ENCODE measurements at regions of chr10 and their contacts with region 1.

Region 1: DNA sequence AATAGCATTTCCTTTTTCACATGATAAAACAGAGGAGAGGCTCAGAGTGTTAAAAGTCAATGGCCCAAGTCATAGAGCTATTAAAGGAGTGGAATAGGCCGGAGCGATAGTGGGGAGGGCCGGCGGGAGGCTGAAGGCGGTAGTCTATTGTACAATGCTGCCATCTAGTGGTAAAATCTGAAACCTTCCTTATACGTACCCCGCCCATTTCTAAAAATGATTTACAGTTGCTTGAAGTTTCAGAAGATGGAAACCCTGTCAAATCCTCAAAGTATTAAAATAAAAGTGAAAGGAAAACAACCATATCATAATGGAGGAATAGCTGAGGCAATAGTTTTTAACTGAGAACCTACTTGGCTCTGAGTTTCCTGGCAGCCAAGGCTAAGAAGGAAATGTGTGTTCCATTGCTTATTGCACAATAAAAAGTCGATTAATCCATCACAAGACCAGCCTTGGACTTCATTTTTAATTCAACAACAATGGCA is 209.1 kb downstream of the CCSER2 start:
- DNase-seq: peak; percentile 74
- CTCF ChIP-seq: peak; percentile 29

Region 2: DNA sequence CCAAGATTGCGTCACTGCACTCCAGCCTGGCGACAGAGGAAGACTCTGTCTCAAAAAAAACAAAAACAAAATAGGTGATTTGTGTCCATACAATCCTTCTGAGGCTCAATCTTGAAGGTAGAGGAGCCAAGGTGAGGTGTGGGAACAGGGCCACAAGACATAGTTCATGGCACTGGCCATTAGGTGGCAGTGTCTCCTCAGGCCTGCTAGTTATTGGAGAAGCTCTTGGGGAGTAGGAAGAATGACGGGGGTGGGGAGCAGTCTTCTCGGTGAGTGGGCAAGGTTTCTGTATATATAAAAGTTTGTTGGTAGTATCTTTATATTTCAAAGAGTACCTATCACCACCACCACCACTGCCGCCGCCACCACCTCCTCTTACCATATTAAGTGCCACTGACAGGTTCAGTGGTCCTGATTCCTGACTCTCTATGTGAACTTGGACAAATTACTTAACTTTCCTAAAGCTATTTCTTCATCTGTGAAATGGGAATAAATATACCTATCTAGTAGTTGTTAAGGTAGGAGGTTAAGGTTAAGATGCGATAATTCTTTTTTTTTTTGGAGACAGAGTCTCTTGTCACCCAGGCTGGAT is 185.1 kb before region 1 on chr10:
- CTCF ChIA-PET with region 1: interaction called, 48 read pairs
- POLR2A ChIA-PET with region 1: no interaction called
- DNase-seq: peak; percentile 66
- CTCF ChIP-seq: peak; percentile 90

Region 3: DNA sequence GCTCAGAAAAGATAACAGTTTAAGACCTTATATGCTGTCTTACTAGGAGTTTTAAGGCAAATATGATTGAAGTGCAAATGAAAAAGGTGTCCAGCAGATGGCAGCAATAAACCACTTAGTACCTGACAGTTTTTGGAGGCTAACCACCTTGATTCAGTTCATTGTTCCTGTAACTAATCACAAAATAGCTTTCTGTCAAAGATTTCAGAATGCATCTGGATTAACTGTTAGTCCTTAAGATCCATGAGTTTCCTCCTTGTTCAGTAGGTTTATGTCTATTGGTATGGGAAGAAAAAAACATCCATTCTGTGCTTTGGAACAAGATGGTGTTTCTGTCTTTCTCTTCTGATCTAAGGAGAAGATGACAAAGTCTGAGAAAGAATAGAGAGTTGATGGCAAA is 162.5 kb before region 1 on chr10:
- CTCF ChIA-PET with region 1: interaction called, 99 read pairs
- POLR2A ChIA-PET with region 1: no interaction called
- DNase-seq: peak; percentile 16
- CTCF ChIP-seq: peak; percentile 68

Region 4: DNA sequence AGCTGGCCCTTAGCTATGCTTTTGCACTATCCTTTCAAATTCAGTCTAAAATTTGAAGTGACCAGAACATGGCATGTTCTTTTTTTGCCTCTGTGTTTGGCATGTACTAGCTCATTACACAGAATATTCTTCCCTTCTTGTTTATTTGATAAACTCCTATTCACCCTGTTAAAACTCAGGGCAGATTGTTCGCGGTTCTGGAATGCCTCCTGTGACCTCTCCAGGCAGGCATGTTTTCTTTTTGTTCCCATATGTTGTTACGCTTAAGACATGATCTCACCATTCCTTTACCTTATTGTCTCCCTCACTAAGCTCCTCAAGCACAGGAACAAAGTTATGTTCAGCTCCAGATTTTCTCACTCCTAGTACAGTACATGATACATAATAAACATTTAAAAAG is 27.4 kb before region 1 on chr10:
- CTCF ChIA-PET with region 1: interaction called, 10 read pairs
- POLR2A ChIA-PET with region 1: no interaction called
- DNase-seq: no peak
- CTCF ChIP-seq: no peak

Region 5: DNA sequence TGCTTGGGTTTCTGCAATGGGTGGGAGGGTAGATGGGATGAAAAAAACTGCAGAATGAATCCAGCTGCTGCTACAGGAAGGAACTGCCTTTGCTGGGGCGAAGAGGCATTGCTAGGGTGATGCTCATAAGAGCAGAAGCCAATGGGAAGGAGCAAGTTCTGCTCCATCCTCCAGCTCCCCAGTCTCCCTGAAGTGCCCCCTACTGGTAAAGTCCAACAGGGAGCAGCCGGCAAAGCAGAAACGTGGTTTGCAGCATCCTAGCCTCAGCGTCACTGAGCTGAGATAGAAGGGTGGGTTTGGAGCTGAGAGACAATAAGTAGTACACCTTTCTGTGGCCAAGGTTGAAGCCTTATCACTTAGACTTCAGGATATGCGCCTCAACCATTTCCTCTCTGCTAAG is 11.4 kb after region 1 on chr10:
- CTCF ChIA-PET with region 1: interaction called, 74 read pairs
- POLR2A ChIA-PET with region 1: no interaction called
- DNase-seq: no peak
- CTCF ChIP-seq: peak; percentile 14

Region 6: DNA sequence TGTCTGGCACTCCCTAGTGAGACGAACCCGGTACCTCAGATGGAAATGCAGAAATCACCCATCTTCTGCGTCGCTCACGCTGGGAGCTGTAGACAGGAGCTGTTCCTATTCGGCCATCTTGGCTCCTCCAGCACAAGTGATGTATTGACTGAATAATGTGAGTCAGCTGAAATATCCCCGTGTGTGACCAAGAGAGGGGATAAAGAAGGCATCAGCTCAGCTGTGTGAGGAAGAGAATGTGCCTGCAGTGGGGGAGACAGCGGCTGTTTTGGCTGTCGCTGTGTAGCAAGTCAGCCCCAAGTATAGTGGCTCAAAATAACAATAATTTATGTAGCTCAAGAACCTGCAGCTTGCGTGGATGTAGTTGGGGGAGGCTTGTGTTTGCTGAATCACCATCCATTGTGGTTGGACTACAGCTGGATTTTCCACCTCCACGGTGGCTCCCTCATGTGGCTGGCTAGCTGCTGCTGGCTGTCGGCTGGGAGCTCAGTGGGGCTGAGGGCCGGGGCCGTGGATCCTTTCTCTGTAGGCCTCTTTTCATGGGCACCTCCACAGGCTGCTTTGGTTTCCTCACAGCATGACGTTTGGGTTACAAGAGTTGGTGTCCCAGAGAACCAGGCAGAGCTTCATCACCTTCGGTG is 225.4 kb after region 1 on chr10:
- CTCF ChIA-PET with region 1: no interaction called
- POLR2A ChIA-PET with region 1: no interaction called
- DNase-seq: no peak
- CTCF ChIP-seq: no peak